Endothelial cell of umbilical vein (primary cell): ENCODE measurements at regions of chr17 and their contacts with region 1.

Region 1: DNA sequence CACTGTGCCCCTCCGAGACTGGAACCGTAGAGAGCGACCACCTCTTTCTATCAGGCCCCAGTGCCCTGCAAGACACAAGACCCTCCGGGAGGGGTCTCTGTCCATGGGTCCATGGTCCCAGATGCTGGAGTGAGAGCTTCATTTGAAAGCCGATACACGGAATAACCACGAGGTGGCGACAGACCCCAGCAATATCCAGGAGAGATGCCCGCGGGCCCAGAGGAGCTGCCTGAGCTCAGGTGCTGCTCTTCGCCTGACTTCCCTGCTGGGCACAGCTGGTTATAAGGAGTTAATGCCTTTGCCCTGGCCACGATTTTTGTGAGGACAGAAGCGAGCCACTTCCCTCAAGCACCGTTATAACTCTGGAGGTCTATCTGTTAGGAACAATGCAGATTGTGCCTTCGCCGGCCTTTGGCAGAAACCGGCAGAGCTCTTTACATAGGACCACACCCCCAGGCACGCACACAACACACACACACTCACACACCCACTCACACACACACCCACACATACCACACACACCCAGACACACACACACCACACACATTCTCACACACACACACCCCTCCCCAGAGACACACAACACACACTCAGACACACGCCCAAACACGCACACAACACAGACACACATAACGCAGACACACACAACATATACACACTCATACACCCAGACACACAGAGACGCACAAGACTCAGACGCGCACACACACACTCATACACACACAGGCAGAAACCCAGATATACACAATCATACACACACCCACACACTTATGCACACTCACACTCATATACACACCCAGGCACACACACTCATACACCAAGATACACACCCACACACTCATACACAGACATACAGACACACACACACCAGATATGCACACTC is 436.4 kb downstream of the SOX9 start:
- DNase-seq: peak; percentile 22
- H3K4me3 ChIP-seq: no peak overlapping the region
- H3K27ac ChIP-seq: no peak overlapping the region
- H3K4me1 ChIP-seq: no peaks in the 10 kb centered on the region
- H3K27me3 ChIP-seq: no peaks in the 10 kb centered on the region
- CTCF ChIP-seq: peak; percentile 66 to 72
- POLR2A ChIP-seq: no peak

Region 2: GRCh38 chr17:72539981-72540897 is 16.9 kb before region 1 on chr17:
- CTCF ChIA-PET with region 1: interaction called, 23 read pairs
- POLR2A ChIA-PET with region 1: no interaction called
- dilution Hi-C with region 1: no loop called
- intact Hi-C with region 1: no loop called
- DNase-seq: peak; percentile 18
- H3K4me3 ChIP-seq: no peak overlapping the region
- H3K27ac ChIP-seq: no peak overlapping the region
- H3K4me1 ChIP-seq: no peaks in the 10 kb centered on the region
- H3K27me3 ChIP-seq: no peaks in the 10 kb centered on the region
- CTCF ChIP-seq: peak; percentile 73 to 83
- POLR2A ChIP-seq: no peak

Region 3: DNA sequence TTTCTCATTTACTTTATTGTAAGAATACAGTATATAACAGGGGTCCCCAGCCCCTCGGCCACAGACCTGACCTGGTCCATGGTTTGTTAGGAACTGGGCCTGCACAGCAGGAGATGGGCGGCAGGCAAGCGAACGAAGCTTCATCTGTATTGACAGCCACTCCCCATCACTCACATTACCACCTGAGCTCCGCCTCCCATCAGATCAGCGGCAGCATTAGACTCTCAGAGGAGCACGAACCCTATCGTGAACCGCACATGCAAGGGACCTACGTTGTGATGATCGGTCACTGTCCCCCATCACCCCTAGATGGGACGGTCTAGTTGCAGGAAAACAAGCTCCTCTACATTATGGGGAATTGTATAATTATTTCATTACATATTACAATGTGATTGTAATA is 124.7 kb after region 1 on chr17:
- CTCF ChIA-PET with region 1: no interaction called
- POLR2A ChIA-PET with region 1: no interaction called
- dilution Hi-C with region 1: no loop called
- intact Hi-C with region 1: no loop called
- DNase-seq: no peak
- H3K4me3 ChIP-seq: no peak overlapping the region
- H3K27ac ChIP-seq: no peak overlapping the region
- H3K4me1 ChIP-seq: no peaks in the 10 kb centered on the region
- H3K27me3 ChIP-seq: no peaks in the 10 kb centered on the region
- CTCF ChIP-seq: no peak
- POLR2A ChIP-seq: no peak

Region 4: DNA sequence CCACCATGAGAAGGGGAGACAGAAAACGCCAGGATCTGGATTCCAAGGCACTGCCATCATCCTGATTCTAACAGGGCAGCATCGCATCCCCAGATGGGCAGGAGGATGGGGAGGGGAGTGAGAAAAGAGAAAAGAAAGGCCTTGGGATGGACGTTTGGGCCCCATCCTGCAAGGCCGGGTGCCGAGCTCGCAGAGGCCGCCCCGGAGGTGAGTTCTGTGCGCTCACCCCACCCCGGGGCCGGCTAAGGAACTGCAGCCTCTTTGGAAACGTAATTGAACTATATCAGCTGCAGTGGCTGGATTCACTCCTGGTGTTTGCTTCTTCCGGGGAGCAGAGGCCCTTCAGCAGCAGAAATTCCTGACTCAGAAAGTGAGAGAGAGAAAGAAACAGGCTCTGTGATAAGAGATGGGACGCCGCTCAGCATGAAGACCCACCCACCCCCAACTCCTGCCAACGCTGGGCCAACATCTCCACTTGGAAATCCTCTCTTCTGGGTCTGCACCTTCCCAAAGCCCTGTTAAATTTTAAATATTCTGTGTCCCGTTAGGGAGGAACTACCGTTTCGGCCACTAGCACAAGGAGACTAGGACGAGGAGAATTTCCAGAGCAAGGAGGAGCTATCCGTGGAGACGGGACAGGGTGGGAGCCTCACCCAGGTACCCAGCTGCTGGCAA is 599.1 kb after region 1 on chr17:
- CTCF ChIA-PET with region 1: interaction called, 17 read pairs
- POLR2A ChIA-PET with region 1: no interaction called
- dilution Hi-C with region 1: no loop called
- intact Hi-C with region 1: loop called (anchors 1 kb)
- DNase-seq: peak; percentile 21
- H3K4me3 ChIP-seq: no peak overlapping the region
- H3K27ac ChIP-seq: no peak overlapping the region
- H3K4me1 ChIP-seq: no peaks in the 10 kb centered on the region
- H3K27me3 ChIP-seq: peaks cover 8 to 11% of the 10 kb centered on the region in 2 experiments
- CTCF ChIP-seq: peak; percentile 76 to 77
- POLR2A ChIP-seq: no peak

Region 5: GRCh38 chr17:73231841-73232586 is 674.8 kb after region 1 on chr17:
- CTCF ChIA-PET with region 1: interaction called, 10 read pairs
- POLR2A ChIA-PET with region 1: no interaction called
- dilution Hi-C with region 1: no loop called
- intact Hi-C with region 1: no loop called
- DNase-seq: peak; percentile 96
- H3K4me3 ChIP-seq: peak overlapping the region; percentile 83 to 93 (median 84)
- H3K27ac ChIP-seq: peak overlapping the region; percentile 83
- H3K4me1 ChIP-seq: peaks cover 38% of the 10 kb centered on the region
- H3K27me3 ChIP-seq: no peaks in the 10 kb centered on the region
- CTCF ChIP-seq: no peak
- POLR2A ChIP-seq: peak; percentile 29

Region 6: DNA sequence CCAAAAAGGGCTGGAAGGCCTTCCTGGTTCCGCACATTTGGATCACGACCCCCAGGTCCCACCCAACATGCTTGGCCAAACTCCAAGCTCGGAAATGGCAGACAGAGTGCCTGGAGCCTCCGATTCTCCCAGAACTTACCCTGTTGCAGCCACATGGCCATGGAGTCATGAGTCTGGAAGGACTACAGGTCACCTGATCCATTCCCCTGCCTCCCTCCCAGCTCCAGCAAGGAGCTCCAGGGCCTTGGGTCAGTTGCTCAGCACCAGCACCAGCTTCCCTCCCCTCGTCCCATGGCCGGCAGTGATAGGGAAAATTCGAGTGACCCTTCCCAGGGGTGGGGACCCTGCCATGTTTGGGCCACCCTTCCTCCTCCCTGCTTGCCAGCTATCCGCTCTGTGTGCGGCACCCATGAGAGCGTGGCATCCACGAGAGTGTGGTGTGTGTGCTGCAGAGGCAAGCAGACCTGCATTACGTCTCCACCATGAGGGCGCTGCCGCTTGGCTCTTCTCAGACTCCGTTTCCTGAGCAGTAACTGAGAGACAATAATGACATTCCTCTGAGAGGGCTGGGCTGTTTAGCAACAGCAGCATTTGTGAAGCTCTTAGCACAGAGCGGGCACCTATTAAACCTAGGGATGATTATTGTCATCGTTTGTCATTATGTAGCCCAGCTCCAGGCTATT is 1625.0 kb after region 1 on chr17:
- CTCF ChIA-PET with region 1: interaction called, 11 read pairs
- POLR2A ChIA-PET with region 1: no interaction called
- dilution Hi-C with region 1: no loop called
- intact Hi-C with region 1: no loop called
- DNase-seq: no peak
- H3K4me3 ChIP-seq: no peak overlapping the region
- H3K27ac ChIP-seq: no peak overlapping the region
- H3K4me1 ChIP-seq: no peaks in the 10 kb centered on the region
- H3K27me3 ChIP-seq: no peaks in the 10 kb centered on the region
- CTCF ChIP-seq: no peak
- POLR2A ChIP-seq: no peak